PC-9 (cell line): ENCODE measurements at regions of chr2 and their contacts with region 1.

Region 1: GRCh38 chr2:12456293-12457151 is 260.2 kb upstream of the TRIB2 start:
- DNase-seq: peak; percentile 81 to 100
- H3K4me3 ChIP-seq: peak overlapping the region; percentile 47; the same call in 1 of the 2 replicates
- H3K27ac ChIP-seq: peak overlapping the region; percentile 88
- H3K4me1 ChIP-seq: peaks cover 38% of the 10 kb centered on the region
- H3K27me3 ChIP-seq: no peaks in the 10 kb centered on the region
- CTCF ChIP-seq: no peak

Region 2: DNA sequence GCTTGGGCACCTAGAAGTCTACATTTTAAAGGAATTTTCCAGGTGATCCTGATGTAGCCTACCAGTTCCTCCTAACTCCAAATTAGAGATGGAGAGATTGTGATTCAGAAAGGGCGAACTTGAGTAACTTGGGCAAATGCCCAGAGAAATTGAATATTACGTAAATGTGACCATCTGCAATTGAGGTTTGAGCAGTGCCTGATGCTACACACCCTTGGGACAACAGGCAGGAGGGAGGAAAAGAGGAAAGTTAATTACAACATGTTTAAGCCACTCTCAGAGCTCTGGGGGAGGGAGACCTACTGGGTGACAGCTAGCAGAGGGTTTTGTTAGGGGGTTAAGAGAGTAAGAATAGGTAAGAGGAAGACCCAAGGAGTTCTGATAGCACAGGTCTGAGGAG is 501.2 kb before region 1 on chr2:
- CTCF ChIA-PET with region 1: no interaction called
- POLR2A ChIA-PET with region 1: no interaction called
- intact Hi-C with region 1: no loop called
- DNase-seq: peak in 1 of 2 experiments; percentile 44
- H3K4me3 ChIP-seq: no peak overlapping the region
- H3K27ac ChIP-seq: no peak overlapping the region
- H3K4me1 ChIP-seq: no peaks in the 10 kb centered on the region
- H3K27me3 ChIP-seq: no peaks in the 10 kb centered on the region
- CTCF ChIP-seq: no peak

Region 3: GRCh38 chr2:12155303-12156051 is 301.0 kb before region 1 on chr2:
- CTCF ChIA-PET with region 1: no interaction called
- POLR2A ChIA-PET with region 1: no interaction called
- intact Hi-C with region 1: loop called (anchors 2 kb)
- DNase-seq: peak; percentile 58 to 86
- H3K4me3 ChIP-seq: no peak overlapping the region
- H3K27ac ChIP-seq: peak overlapping the region; percentile 79
- H3K4me1 ChIP-seq: peaks cover 36% of the 10 kb centered on the region
- H3K27me3 ChIP-seq: no peaks in the 10 kb centered on the region
- CTCF ChIP-seq: no peak

Region 4: GRCh38 chr2:12493031-12493513 is 36.5 kb after region 1 on chr2:
- CTCF ChIA-PET with region 1: no interaction called
- POLR2A ChIA-PET with region 1: no interaction called
- intact Hi-C with region 1: loop called (anchors 2 kb)
- DNase-seq: peak; percentile 76 to 87
- H3K4me3 ChIP-seq: no peak overlapping the region
- H3K27ac ChIP-seq: peak overlapping the region; percentile 23
- H3K4me1 ChIP-seq: peaks cover 12% of the 10 kb centered on the region
- H3K27me3 ChIP-seq: no peaks in the 10 kb centered on the region
- CTCF ChIP-seq: no peak